Natural killer cell (primary cell): ENCODE measurements at regions of chr3 and their contacts with region 1.

Region 1: DNA sequence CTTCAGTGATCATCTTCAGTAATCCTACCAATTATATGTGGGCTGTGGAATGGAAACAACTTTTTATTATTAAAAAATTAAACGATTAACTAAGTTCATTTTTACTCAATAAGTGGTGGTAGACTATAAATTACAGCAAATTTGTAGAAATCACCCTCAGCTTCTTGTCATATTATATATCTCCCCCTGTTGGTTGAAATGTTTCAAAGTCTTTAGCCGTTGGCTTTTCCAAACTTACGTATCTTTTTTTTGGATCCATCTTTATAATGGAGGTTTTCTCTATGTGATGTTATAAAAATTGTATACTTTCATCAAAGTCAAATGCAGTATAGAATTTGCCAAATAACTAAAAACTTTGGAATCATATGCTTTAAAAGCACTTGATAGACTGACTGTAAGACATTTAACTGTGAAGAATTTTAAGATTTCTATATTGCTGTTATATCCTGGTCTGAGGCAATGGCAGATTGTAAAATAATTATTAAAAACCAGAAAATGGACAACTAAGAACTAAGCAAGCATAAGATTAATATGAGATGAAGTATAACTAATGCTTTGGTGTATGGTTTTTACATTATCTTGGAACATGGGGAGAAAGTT is 44.7 kb downstream of the ATP11B start:
- DNase-seq: peak in 1 of 2 donors; percentile 50
- ATAC-seq: peak in 1 of 3 donors; percentile 44
- H3K4me3 ChIP-seq: no peak overlapping the region
- H3K4me3 Mint-ChIP-seq: no peak overlapping the region
- H3K27ac ChIP-seq: no peak overlapping the region
- H3K27ac Mint-ChIP-seq: no peak overlapping the region
- H3K4me1 ChIP-seq: no peaks in the 10 kb centered on the region
- H3K4me1 Mint-ChIP-seq: peaks cover 7 to 17% of the 10 kb centered on the region in 2 donors
- H3K27me3 ChIP-seq: no peaks in the 10 kb centered on the region
- H3K27me3 Mint-ChIP-seq: no peaks in the 10 kb centered on the region
- CTCF ChIP-seq: peak; percentile 52

Region 2: GRCh38 chr3:182713743-182714517 is 124.0 kb before region 1 on chr3:
- intact Hi-C with region 1: loop called (anchors 1 kb)
- DNase-seq: peak in 1 of 2 donors; percentile 63
- ATAC-seq: peak; percentile 57 to 69 (median 64)
- H3K4me3 ChIP-seq: no peak overlapping the region
- H3K4me3 Mint-ChIP-seq: no peak overlapping the region
- H3K27ac ChIP-seq: no peak overlapping the region
- H3K27ac Mint-ChIP-seq: no peak overlapping the region
- H3K4me1 ChIP-seq: no peaks in the 10 kb centered on the region
- H3K4me1 Mint-ChIP-seq: peaks cover 0 to 7% of the 10 kb centered on the region in 2 donors
- H3K27me3 ChIP-seq: no peaks in the 10 kb centered on the region
- H3K27me3 Mint-ChIP-seq: peaks cover 0 to 12% of the 10 kb centered on the region in 2 donors
- CTCF ChIP-seq: peak; percentile 53